ENCODE measurements at regions of chrX and their contacts with region 1.

Region 1: GRCh38 chrX:41178201-41178600 is 93.0 kb downstream of the USP9X start:
- DNase-seq: no peak
- H3K4me3 ChIP-seq: no peak overlapping the region
- H3K27ac ChIP-seq: no peak overlapping the region
- H3K4me1 ChIP-seq: peaks cover 0 to 3% of the 10 kb centered on the region in 2 donors
- H3K27me3 ChIP-seq: no peaks in the 10 kb centered on the region
- CTCF ChIP-seq: no peak

Region 2: DNA sequence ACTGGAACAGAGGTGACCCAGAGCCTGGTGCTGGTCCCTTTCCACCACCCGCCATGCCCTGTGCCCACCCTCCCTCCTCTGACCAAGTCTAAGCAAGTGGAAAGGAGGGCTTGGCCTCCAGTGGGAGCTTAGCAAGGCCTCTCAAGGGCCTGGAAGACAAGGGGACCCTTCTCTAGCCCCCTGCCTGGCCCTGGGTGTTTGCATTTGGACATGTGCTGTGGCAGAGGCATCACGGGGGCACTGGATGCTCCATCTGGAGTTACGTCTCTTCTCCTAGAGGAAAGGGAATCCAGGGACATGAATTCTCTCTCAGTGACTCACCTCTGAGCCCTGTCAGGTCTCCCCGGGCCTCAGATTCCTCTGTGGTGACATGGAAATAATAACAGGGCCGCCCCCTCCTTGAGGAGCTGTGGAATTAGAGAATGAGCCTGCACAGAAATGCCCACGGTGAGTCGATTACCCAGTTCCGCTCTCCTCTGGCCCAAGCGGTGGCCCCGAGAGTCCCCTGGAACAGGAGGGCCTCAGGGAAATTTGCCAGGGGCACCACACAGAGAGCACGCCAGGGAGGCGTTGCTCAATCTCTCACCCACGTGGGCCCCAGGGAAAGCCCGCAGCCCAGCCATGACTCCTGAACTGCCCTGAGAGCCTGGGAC is 1270.1 kb before region 1 on chrX:
- intact Hi-C with region 1: no loop called
- DNase-seq: peak; percentile 38 to 90
- H3K4me3 ChIP-seq: peak overlapping the region in 1 of 2 donors; percentile 47
- H3K27ac ChIP-seq: peak overlapping the region; percentile 48 to 72
- H3K4me1 ChIP-seq: peaks cover 4 to 15% of the 10 kb centered on the region in 2 donors
- H3K27me3 ChIP-seq: no peaks in the 10 kb centered on the region
- CTCF ChIP-seq: no peak

Region 3: GRCh38 chrX:40952855-40953254 is 225.3 kb before region 1 on chrX:
- intact Hi-C with region 1: no loop called
- DNase-seq: no peak
- H3K4me3 ChIP-seq: peak overlapping the region; percentile 36 to 49
- H3K27ac ChIP-seq: no peak overlapping the region
- H3K4me1 ChIP-seq: peaks cover 0 to 3% of the 10 kb centered on the region in 2 donors
- H3K27me3 ChIP-seq: no peaks in the 10 kb centered on the region
- CTCF ChIP-seq: no peak

Region 4: GRCh38 chrX:41258226-41258625 is 80.0 kb after region 1 on chrX:
- intact Hi-C with region 1: loop called (anchors 2 kb)
- DNase-seq: no peak
- H3K4me3 ChIP-seq: no peak overlapping the region
- H3K27ac ChIP-seq: no peak overlapping the region
- H3K4me1 ChIP-seq: no peaks in the 10 kb centered on the region
- H3K27me3 ChIP-seq: no peaks in the 10 kb centered on the region
- CTCF ChIP-seq: no peak

Region 5: GRCh38 chrX:41580423-41581064 is 402.3 kb after region 1 on chrX:
- intact Hi-C with region 1: no loop called
- DNase-seq: no peak
- H3K4me3 ChIP-seq: peak overlapping the region in 1 of 2 donors; percentile 19
- H3K27ac ChIP-seq: no peak overlapping the region
- H3K4me1 ChIP-seq: no peaks in the 10 kb centered on the region
- H3K27me3 ChIP-seq: no peaks in the 10 kb centered on the region
- CTCF ChIP-seq: no peak

Measured in ascending aorta (tissue), 2 donors.